HCT116 (cell line): ENCODE measurements at regions of chr12 and their contacts with region 1.

Region 1: DNA sequence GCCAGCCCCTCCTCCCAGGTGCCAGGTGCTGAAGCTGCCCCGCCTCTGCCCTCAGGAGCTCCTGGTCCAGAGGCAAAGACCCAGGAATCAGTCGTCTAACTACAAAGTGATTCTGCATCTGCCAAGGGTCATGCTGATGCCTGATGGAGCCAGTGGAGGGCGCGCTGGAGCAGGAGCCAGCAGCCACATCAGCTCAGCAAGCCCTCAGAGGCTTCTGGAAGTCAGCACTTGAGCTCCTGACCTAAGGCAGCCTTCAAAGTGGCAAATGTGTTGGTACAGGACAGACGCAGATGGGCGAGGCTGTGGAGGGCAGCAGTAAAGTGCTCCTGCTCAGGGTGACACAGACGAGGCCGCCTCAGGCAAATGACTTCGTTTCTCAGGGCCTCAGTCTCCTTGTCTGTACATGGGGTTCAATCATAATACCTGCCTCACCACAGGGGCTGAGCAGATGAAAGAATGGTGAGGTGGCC is 10.9 kb downstream of the C12orf43 start:
- DNase-seq: peak; percentile 46
- ATAC-seq: peak; percentile 71
- H3K4me3 ChIP-seq: no peak overlapping the region
- H3K27ac ChIP-seq: no peak overlapping the region
- H3K4me1 ChIP-seq: no peaks in the 10 kb centered on the region
- H3K27me3 ChIP-seq: no peaks in the 10 kb centered on the region
- CTCF ChIP-seq: peak; percentile 63 to 76 (median 74); a peak in 5 of 6 replicates
- POLR2A ChIP-seq: no peak
- RAD21 ChIP-seq: peak; percentile 67

Region 2: DNA sequence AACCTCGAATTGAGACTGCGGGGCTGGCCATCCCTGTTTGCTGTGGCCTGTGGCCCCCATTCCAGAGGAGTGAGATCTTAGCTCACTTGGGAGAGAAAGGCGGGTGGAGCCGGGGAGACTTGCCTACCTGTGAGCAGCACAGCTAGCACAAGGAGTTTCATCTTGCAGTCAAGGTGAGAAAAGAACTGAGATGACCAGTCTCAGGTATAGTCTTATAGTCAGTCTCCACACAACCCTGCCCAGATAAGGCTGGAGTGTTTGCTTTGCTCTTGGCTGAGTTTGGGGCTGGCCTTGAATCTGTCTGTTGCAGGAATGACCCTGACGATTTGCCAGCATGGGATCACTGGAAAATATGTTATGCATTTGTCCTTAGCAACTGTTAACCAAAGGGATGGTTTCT is 677.8 kb before region 1 on chr12 and contains the start of gene PLA2G1B:
- CTCF ChIA-PET with region 1: no interaction called
- POLR2A ChIA-PET with region 1: no interaction called
- RAD21 ChIA-PET with region 1: no interaction called
- intact Hi-C with region 1: loop called (anchors 5 kb)
- DNase-seq: no peak
- ATAC-seq: no peak
- H3K4me3 ChIP-seq: no peak within 1 kb of the TSS
- H3K27ac ChIP-seq: no peak within 1 kb of the TSS
- H3K4me1 ChIP-seq: peaks cover 0 to 8% of the 10 kb centered on the region in 2 experiments; a peak in 1 of 4 replicates
- H3K27me3 ChIP-seq: no peaks in the 10 kb centered on the region
- CTCF ChIP-seq: no peak
- POLR2A ChIP-seq: no peak
- RAD21 ChIP-seq: no peak
- total RNA-seq, gene PLA2G1B: 2.0 TPM

Region 3: GRCh38 chr12:120640840-120641833 is 364.2 kb before region 1 on chr12:
- CTCF ChIA-PET with region 1: interaction called, 3 read pairs
- POLR2A ChIA-PET with region 1: no interaction called
- RAD21 ChIA-PET with region 1: no interaction called
- intact Hi-C with region 1: loop called (anchors 10 kb)
- DNase-seq: no peak
- ATAC-seq: peak; percentile 73
- H3K4me3 ChIP-seq: peak overlapping the region; percentile 51 to 63
- H3K27ac ChIP-seq: no peak overlapping the region
- H3K4me1 ChIP-seq: peaks cover 9 to 19% of the 10 kb centered on the region in 2 experiments; a peak in 3 of 4 replicates
- H3K27me3 ChIP-seq: peaks cover 4% of the 10 kb centered on the region; the same call in 1 of the 2 replicates
- CTCF ChIP-seq: no peak
- POLR2A ChIP-seq: no peak
- RAD21 ChIP-seq: no peak

Region 4: GRCh38 chr12:120692524-120693033 is 312.8 kb before region 1 on chr12:
- CTCF ChIA-PET with region 1: no interaction called
- POLR2A ChIA-PET with region 1: no interaction called
- RAD21 ChIA-PET with region 1: no interaction called
- intact Hi-C with region 1: no loop called
- DNase-seq: no peak
- ATAC-seq: no peak
- H3K4me3 ChIP-seq: no peak overlapping the region
- H3K27ac ChIP-seq: no peak overlapping the region
- H3K4me1 ChIP-seq: peaks cover 18 to 20% of the 10 kb centered on the region in 2 experiments
- H3K27me3 ChIP-seq: no peaks in the 10 kb centered on the region
- CTCF ChIP-seq: no peak
- POLR2A ChIP-seq: no peak
- RAD21 ChIP-seq: no peak

Region 5: GRCh38 chr12:120984351-120984898 is 21.0 kb before region 1 on chr12:
- CTCF ChIA-PET with region 1: no interaction called
- POLR2A ChIA-PET with region 1: no interaction called
- RAD21 ChIA-PET with region 1: no interaction called
- intact Hi-C with region 1: no loop called
- DNase-seq: no peak
- ATAC-seq: no peak
- H3K4me3 ChIP-seq: no peak overlapping the region
- H3K27ac ChIP-seq: no peak overlapping the region
- H3K4me1 ChIP-seq: peaks cover 0 to 6% of the 10 kb centered on the region in 2 experiments; a peak in 3 of 4 replicates
- H3K27me3 ChIP-seq: no peaks in the 10 kb centered on the region
- CTCF ChIP-seq: no peak
- POLR2A ChIP-seq: no peak
- RAD21 ChIP-seq: no peak

Region 6: GRCh38 chr12:121095544-121096198 is 90.3 kb after region 1 on chr12:
- CTCF ChIA-PET with region 1: interaction called, 4 read pairs
- POLR2A ChIA-PET with region 1: no interaction called
- RAD21 ChIA-PET with region 1: no interaction called
- intact Hi-C with region 1: loop called (anchors 5 kb)
- DNase-seq: peak; percentile 48
- ATAC-seq: peak; percentile 97
- H3K4me3 ChIP-seq: peak overlapping the region; percentile 36 to 52
- H3K27ac ChIP-seq: no peak overlapping the region
- H3K4me1 ChIP-seq: peaks cover 3 to 14% of the 10 kb centered on the region in 2 experiments; a peak in 3 of 4 replicates
- H3K27me3 ChIP-seq: no peaks in the 10 kb centered on the region
- CTCF ChIP-seq: peak; percentile 68 to 84 (median 70)
- POLR2A ChIP-seq: peak; percentile 23
- RAD21 ChIP-seq: peak; percentile 81

Region 7: GRCh38 chr12:121110211-121110940 is 105.0 kb after region 1 on chr12:
- CTCF ChIA-PET with region 1: interaction called, 3 read pairs
- POLR2A ChIA-PET with region 1: no interaction called
- RAD21 ChIA-PET with region 1: no interaction called
- intact Hi-C with region 1: loop called (anchors 2 kb)
- DNase-seq: peak; percentile 56
- ATAC-seq: peak; percentile 92
- H3K4me3 ChIP-seq: no peak overlapping the region
- H3K27ac ChIP-seq: no peak overlapping the region
- H3K4me1 ChIP-seq: no peaks in the 10 kb centered on the region
- H3K27me3 ChIP-seq: no peaks in the 10 kb centered on the region
- CTCF ChIP-seq: peak; percentile 85 to 99 (median 93)
- POLR2A ChIP-seq: no peak
- RAD21 ChIP-seq: peak; percentile 95

Region 8: GRCh38 chr12:121230538-121230907 is 225.1 kb after region 1 on chr12:
- CTCF ChIA-PET with region 1: interaction called, 3 read pairs
- POLR2A ChIA-PET with region 1: no interaction called
- RAD21 ChIA-PET with region 1: no interaction called
- intact Hi-C with region 1: loop called (anchors 5 kb)
- DNase-seq: no peak
- ATAC-seq: peak; percentile 34
- H3K4me3 ChIP-seq: no peak overlapping the region
- H3K27ac ChIP-seq: peak overlapping the region; percentile 75
- H3K4me1 ChIP-seq: peaks cover 13 to 20% of the 10 kb centered on the region in 2 experiments
- H3K27me3 ChIP-seq: no peaks in the 10 kb centered on the region
- CTCF ChIP-seq: no peak
- POLR2A ChIP-seq: no peak
- RAD21 ChIP-seq: no peak

Region 9: DNA sequence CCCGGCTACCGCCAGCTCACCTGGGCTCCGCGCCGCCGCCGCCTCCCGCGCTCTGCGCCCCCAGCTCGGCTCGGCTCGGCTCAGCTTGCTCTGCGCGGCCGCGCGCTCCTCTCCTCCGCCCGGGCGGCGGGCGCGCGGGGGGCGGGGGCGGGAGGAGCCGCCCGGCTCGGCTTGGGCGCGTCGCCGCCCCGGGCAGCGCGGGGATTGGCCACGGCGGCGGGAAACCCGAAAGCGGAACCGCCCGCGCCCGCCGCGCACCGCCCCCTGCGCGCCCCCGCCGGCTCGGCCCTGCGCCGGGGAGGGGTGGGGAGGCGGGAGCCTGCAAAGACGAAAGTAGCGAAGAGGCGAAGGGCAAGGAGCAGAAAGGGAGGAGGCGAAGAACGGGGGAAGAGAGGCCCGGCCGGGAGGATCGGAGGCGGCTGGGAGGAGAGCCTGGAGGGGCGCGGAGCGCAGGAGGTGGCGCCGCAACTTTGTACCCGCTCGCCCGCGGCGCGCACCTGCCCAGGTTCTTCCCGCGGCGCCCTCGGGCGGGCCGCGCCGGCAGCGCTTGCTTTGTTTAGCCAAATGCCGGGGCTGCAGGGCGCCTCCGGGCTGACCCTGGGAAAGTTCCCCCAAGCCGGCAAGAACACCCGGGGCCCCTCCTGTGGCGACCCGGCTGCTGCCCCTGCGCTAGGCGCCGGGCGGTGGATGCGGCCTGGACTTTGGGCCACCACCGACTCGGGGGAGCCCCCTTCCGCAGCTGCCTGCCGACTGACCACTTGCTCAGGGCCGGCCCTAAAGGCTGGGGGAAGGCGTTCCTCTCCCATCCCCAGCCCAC is 291.4 kb after region 1 on chr12 and contains the start of gene CAMKK2:
- CTCF ChIA-PET with region 1: no interaction called
- POLR2A ChIA-PET with region 1: no interaction called
- RAD21 ChIA-PET with region 1: no interaction called
- intact Hi-C with region 1: no loop called
- DNase-seq: peak; percentile 54
- ATAC-seq: peak; percentile 82
- H3K4me3 ChIP-seq: peak within 1 kb of the TSS; percentile 88 to 96
- H3K27ac ChIP-seq: peak within 1 kb of the TSS; percentile 85
- H3K4me1 ChIP-seq: peaks cover 3 to 19% of the 10 kb centered on the region in 2 experiments
- H3K27me3 ChIP-seq: no peaks in the 10 kb centered on the region
- CTCF ChIP-seq: 0 out of 6 replicates have a peak, but pooled peaks of 1 of the 3 experiments have one; percentile 7
- POLR2A ChIP-seq: no peak
- RAD21 ChIP-seq: no peak
- total RNA-seq, gene CAMKK2: 33.8 TPM